GM12878 (cell line): ENCODE measurements at regions of chr12 and their contacts with region 1.

Region 1: DNA sequence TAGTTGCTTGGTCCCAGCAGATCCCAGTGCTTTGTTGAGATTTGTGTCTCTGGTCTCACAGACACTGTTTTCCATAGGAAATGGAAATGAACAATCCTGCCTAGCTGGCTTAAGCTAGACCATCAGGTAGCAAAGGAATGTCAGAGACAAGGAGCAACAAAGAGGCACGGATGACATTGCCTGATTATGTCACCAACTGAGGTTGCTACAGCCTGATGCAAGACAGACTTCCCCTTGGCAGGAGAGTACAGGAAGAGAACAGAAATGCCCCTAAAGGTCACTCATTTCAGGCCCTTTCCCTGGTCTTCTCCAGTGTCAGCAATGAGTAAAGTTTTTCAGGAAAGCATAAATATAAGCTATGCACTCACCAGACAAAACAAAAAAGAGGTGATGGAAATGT is 2.0 kb upstream of the PRB2 start:
- DNase-seq: no peak
- ATAC-seq: no peak
- H3K4me3 ChIP-seq: no peak overlapping the region
- H3K27ac ChIP-seq: no peak overlapping the region
- H3K4me1 ChIP-seq: no peaks in the 10 kb centered on the region
- H3K27me3 ChIP-seq: peaks cover 0 to 2% of the 10 kb centered on the region in 2 experiments; a peak in 2 of 4 replicates
- CTCF ChIP-seq: no peak
- EP300 ChIP-seq: no peak
- POLR2A ChIP-seq: no peak
- RAD21 ChIP-seq: no peak

Region 2: GRCh38 chr12:11347810-11348209 is 49.6 kb before region 1 on chr12:
- CTCF ChIA-PET with region 1: no interaction called
- POLR2A ChIA-PET with region 1: no interaction called
- RAD21 ChIA-PET with region 1: no interaction called
- SMC1A ChIA-PET with region 1: no interaction called
- in situ Hi-C with region 1: loop called (anchors 5 kb)
- intact Hi-C with region 1: loop called (anchors 2 kb)
- DNase-seq: no peak
- ATAC-seq: peak; percentile 81
- H3K4me3 ChIP-seq: no peak overlapping the region
- H3K27ac ChIP-seq: no peak overlapping the region
- H3K4me1 ChIP-seq: no peaks in the 10 kb centered on the region
- H3K27me3 ChIP-seq: no peaks in the 10 kb centered on the region
- CTCF ChIP-seq: peak in 2 of 3 experiments; percentile 15 to 27; a peak in 1 of 6 replicates
- EP300 ChIP-seq: no peak
- POLR2A ChIP-seq: no peak
- RAD21 ChIP-seq: no peak